Activated B cell treated with CpG ODN at 0.5 μM for 24 hours (primary cell): ENCODE measurements at regions of chr15 and their contacts with region 1.

Region 1: GRCh38 chr15:60592371-60593169 is 113.6 kb upstream of the ICE2 start:
- DNase-seq: peak; percentile 62
- ATAC-seq: peak; percentile 87
- H3K4me3 Mint-ChIP-seq: peak overlapping the region; percentile 84
- H3K27ac Mint-ChIP-seq: no peak overlapping the region
- H3K4me1 Mint-ChIP-seq: peaks cover 11% of the 10 kb centered on the region
- H3K27me3 Mint-ChIP-seq: peaks cover 35% of the 10 kb centered on the region
- CTCF ChIP-seq: no peak

Region 2: GRCh38 chr15:60635507-60636352 is 43.2 kb after region 1 on chr15:
- CTCF ChIA-PET with region 1: no interaction called
- POLR2A ChIA-PET with region 1: no interaction called
- intact Hi-C with region 1: loop called (anchors 1 kb)
- DNase-seq: no peak
- ATAC-seq: peak; percentile 95
- H3K4me3 Mint-ChIP-seq: peak overlapping the region; percentile 5
- H3K27ac Mint-ChIP-seq: peak overlapping the region; percentile 20
- H3K4me1 Mint-ChIP-seq: peaks cover 22% of the 10 kb centered on the region
- H3K27me3 Mint-ChIP-seq: no peaks in the 10 kb centered on the region
- CTCF ChIP-seq: no peak

Region 3: DNA sequence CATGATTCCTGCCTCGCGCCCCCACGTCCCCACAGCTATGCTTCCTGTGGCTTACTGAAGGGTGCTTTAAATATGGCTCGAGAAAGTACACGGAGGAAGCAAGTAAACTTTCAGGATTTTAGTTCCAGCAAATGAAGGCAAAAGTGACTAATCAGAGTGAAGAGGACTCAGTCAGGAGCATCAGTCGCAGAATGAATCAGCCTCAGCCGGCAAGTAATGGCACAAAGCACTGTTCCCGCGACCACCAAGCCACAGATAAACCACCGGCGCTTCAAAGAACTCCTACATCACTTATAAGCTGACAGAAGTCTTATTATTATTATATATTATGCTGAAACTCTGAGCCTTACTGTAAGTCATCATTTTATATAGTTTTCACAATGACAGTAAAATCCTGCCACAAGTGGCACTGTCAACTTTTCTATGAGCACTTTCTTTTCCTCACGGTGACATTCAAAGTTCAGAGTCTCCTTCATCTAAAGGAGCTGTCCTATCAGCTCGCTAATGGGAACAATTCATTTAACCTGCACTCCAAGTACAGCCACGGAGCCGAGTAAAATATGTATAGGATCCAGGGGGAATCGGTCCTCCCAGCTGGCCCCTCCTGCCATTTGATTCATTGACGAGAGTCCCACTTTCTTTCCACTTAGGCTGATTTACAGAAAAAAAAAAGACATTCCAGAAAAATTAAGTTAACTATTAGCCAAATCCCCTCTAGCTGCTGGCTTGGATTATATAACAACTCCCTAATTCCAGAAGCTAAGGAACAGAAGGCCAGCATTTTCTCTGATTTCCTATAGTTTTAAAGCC is 103.3 kb after region 1 on chr15:
- CTCF ChIA-PET with region 1: no interaction called
- POLR2A ChIA-PET with region 1: no interaction called
- intact Hi-C with region 1: no loop called
- DNase-seq: no peak
- ATAC-seq: no peak
- H3K4me3 Mint-ChIP-seq: no peak overlapping the region
- H3K27ac Mint-ChIP-seq: no peak overlapping the region
- H3K4me1 Mint-ChIP-seq: no peaks in the 10 kb centered on the region
- H3K27me3 Mint-ChIP-seq: no peaks in the 10 kb centered on the region
- CTCF ChIP-seq: no peak